ENCODE measurements at regions of chr19 and their contacts with region 1.

Region 1: GRCh38 chr19:35882114-35882832 is 13.9 kb downstream of the APLP1 start:
- DNase-seq: peak; percentile 64
- ATAC-seq: no peak
- H3K4me3 ChIP-seq: no peak overlapping the region
- H3K27ac ChIP-seq: no peak overlapping the region
- H3K4me1 ChIP-seq: no peaks in the 10 kb centered on the region
- H3K27me3 ChIP-seq: no peaks in the 10 kb centered on the region
- CTCF ChIP-seq: peak; percentile 67
- EP300 ChIP-seq: no peak
- POLR2A ChIP-seq: no peak
- RAD21 ChIP-seq: 0 out of 2 replicates have a peak, but pooled peaks have one; percentile 17

Region 2: GRCh38 chr19:35828692-35829301 is 53.5 kb before region 1 on chr19:
- CTCF ChIA-PET with region 1: no interaction called
- POLR2A ChIA-PET with region 1: no interaction called
- in situ Hi-C with region 1: no loop called
- intact Hi-C with region 1: loop called (anchors 1 kb)
- DNase-seq: peak; percentile 66
- ATAC-seq: peak; percentile 94
- H3K4me3 ChIP-seq: no peak overlapping the region
- H3K27ac ChIP-seq: no peak overlapping the region
- H3K4me1 ChIP-seq: peaks cover 6% of the 10 kb centered on the region; the same call in 1 of the 2 replicates
- H3K27me3 ChIP-seq: peaks cover 0 to 25% of the 10 kb centered on the region in 2 experiments; a peak in 2 of 5 replicates
- CTCF ChIP-seq: no peak
- EP300 ChIP-seq: no peak
- POLR2A ChIP-seq: no peak
- RAD21 ChIP-seq: no peak

Region 3: DNA sequence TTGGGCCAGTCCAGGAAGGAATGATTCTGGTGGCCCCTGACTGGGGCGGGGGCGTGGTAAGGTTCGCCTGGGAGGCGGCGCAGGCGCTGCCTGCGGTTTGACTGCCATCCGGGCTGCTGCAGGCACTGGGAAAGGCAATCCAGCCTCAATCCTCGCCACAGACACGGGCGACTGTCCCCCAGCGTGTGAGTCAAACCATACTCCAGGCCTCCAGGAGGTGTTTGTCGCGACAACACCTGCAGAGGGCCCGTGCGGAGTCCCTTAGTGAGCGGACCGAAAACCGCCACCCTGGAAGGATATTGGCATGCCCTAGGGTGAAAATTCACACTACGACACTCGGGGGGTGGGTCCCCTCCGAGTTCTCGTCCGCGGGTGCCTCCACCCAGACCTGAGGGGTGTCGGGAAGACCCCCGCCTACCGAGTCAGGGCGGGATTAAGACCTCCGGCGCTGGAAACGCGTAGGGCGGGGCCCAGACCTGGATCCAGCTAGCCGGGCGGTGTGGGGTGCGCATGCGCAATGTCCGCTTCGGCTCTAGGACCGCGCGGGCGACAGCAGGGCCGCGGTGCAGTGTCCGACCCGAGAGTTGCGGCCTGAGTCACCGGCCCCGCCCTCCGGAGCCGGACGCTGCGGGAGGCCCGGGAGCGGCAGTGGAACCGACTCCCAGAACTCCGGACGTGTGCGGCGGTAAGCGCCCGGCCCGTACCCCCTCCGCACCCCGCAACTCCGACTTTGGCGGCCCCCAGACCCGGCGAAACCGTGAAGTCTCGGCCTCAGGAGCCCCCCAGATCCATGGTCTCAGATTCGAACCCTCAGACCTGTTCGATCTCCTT is 257.4 kb after region 1 on chr19 and contains the start of gene CAPNS1:
- CTCF ChIA-PET with region 1: no interaction called
- POLR2A ChIA-PET with region 1: no interaction called
- in situ Hi-C with region 1: no loop called
- intact Hi-C with region 1: no loop called
- DNase-seq: peak; percentile 88
- ATAC-seq: peak; percentile 88
- H3K4me3 ChIP-seq: peak within 1 kb of the TSS; percentile 79 to 100 (median 98)
- H3K27ac ChIP-seq: peak within 1 kb of the TSS; percentile 93
- H3K4me1 ChIP-seq: peaks cover 24% of the 10 kb centered on the region
- H3K27me3 ChIP-seq: no peaks in the 10 kb centered on the region; a peak in 1 of 5 replicates
- CTCF ChIP-seq: peak; percentile 21
- EP300 ChIP-seq: no peak
- POLR2A ChIP-seq: peak; percentile 60 to 86; a peak in 3 of 4 replicates
- RAD21 ChIP-seq: peak; percentile 43; the same call in 1 of the 2 replicates
- total RNA-seq, gene CAPNS1: 280 and 322 TPM in 2 replicates

Measured in HepG2 (cell line).